ENCODE measurements at regions of chr17 and their contacts with region 1.

Region 1: GRCh38 chr17:20121359-20122253 is 112.4 kb downstream of the SPECC1 start:
- DNase-seq: peak; percentile 47
- H3K4me3 ChIP-seq: no peak overlapping the region
- H3K27ac ChIP-seq: no peak overlapping the region
- H3K4me1 ChIP-seq: no peaks in the 10 kb centered on the region
- H3K27me3 ChIP-seq: no peaks in the 10 kb centered on the region
- CTCF ChIP-seq: peak; percentile 76 to 87 (median 82)
- POLR2A ChIP-seq: no peak

Region 2: GRCh38 chr17:19771971-19772630 is 349.5 kb before region 1 on chr17:
- intact Hi-C with region 1: no loop called
- DNase-seq: no peak
- H3K4me3 ChIP-seq: no peak overlapping the region
- H3K27ac ChIP-seq: peak overlapping the region in 1 of 2 donors; percentile 48
- H3K4me1 ChIP-seq: no peaks in the 10 kb centered on the region
- H3K27me3 ChIP-seq: no peaks in the 10 kb centered on the region
- CTCF ChIP-seq: no peak
- POLR2A ChIP-seq: no peak

Region 3: GRCh38 chr17:19992803-19993713 is 128.5 kb before region 1 on chr17:
- intact Hi-C with region 1: loop called (anchors 2 kb)
- DNase-seq: peak; percentile 87
- H3K4me3 ChIP-seq: no peak overlapping the region
- H3K27ac ChIP-seq: no peak overlapping the region
- H3K4me1 ChIP-seq: no peaks in the 10 kb centered on the region
- H3K27me3 ChIP-seq: no peaks in the 10 kb centered on the region
- CTCF ChIP-seq: peak; percentile 46 to 89 (median 86)
- POLR2A ChIP-seq: no peak

Region 4: DNA sequence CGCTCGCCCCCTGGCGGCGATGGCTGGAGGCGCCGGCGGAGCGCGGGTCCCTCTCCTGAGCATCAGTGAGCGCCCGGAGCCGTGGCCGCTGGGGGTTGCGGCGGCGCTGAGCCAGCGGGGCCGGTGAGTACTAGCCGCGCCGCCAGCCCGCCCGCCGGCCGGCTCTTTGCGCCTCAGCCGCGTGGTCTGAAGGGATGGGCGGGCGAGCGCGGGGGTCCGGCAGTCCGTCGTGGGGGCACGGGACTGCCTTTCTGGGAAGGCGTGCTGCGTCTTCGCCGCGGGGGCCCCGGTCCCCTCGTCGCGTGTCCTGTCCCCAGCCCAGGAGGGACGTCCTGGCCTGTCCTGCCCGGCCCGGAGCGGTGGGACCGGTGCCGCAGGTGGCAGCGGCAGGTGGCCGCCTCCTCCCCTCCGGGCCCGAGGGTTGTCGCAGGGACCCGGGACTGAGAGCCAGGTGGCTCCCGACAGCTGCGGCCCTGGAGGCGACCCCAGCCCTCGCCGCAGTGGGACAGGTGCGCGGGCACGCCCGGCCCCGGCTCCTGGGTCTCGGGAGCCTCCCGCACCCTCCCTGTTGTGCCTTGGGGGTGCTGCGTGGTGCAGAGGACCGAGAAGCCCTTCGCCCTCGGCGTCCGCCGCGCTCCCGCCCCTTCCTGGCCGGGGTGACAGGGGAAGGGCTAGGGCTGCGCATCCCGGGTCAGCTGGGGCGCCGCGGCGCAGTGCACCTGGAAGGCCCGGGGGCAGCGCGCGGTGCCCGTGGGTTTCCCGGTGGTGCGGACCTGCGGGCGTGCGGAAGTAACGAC is 112.1 kb before region 1 on chr17 and contains the start of gene SPECC1:
- intact Hi-C with region 1: loop called (anchors 5 kb)
- DNase-seq: peak; percentile 63
- H3K4me3 ChIP-seq: peak within 1 kb of the TSS; percentile 46 to 47
- H3K27ac ChIP-seq: peak within 1 kb of the TSS; percentile 45 to 63
- H3K4me1 ChIP-seq: peaks cover 3% of the 10 kb centered on the region
- H3K27me3 ChIP-seq: no peaks in the 10 kb centered on the region
- CTCF ChIP-seq: peak; percentile 91 to 97 (median 94)
- POLR2A ChIP-seq: no peak
- total RNA-seq, gene SPECC1: 29.7 to 85.5 TPM

Region 5: DNA sequence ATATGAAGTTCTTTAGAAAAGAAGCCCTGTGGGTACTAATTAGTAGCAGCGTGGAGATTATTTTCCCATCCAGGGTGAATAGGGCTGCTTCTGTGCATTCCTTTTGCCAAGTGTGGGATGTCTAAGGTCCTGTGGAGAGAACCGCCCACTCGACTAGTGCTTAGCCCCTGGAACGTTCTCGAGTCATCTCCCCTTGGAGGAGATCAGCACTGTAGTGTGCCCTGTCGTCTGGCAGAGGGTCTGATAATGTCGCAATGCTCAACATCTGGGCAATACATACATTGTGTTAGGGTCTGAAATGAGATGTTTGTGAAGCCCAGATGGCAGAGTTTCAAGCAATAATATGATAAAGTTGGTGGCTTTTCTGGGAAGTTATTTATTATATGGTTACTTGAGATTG is 47.6 kb before region 1 on chr17:
- intact Hi-C with region 1: no loop called
- DNase-seq: no peak
- H3K4me3 ChIP-seq: no peak overlapping the region
- H3K27ac ChIP-seq: no peak overlapping the region
- H3K4me1 ChIP-seq: no peaks in the 10 kb centered on the region
- H3K27me3 ChIP-seq: no peaks in the 10 kb centered on the region
- CTCF ChIP-seq: no peak
- POLR2A ChIP-seq: no peak

Region 6: DNA sequence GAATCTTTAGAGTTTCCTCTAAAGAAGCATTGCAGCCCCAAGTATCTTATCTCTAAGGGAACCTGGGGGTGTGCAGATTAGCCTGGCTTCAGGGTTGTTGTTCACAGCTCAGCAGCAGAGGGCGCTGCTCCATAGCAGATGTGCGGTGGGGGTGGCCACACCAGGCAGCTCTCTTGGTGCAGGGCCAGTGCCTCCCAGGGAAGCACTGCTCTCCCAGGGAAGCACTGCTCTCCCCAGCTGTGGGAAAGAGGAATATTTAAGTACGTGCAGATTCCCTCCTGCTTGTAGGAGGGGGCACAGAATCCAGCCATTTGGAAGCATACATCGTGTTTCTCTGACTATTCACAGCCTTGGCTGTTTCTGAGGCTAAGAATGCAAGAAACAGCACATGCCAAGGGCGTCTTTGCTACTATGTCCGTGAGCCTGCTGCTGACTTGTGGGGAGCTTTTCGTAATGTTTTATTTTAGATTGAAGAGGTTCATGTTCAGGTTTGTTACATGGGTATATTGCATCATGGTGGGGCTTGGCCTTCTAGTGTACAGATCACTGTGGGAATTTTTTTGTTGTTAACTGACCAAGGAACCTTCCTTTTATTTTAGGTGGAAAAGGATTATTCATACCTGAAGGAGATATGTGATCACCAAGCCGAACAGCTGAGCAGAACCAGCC is 105.3 kb after region 1 on chr17:
- intact Hi-C with region 1: loop called (anchors 2 kb)
- DNase-seq: peak; percentile 74
- H3K4me3 ChIP-seq: no peak overlapping the region
- H3K27ac ChIP-seq: no peak overlapping the region
- H3K4me1 ChIP-seq: no peaks in the 10 kb centered on the region
- H3K27me3 ChIP-seq: no peaks in the 10 kb centered on the region
- CTCF ChIP-seq: peak; percentile 41 to 88 (median 78)
- POLR2A ChIP-seq: no peak

Region 7: GRCh38 chr17:20281860-20282259 is 160.3 kb after region 1 on chr17:
- intact Hi-C with region 1: no loop called
- DNase-seq: no peak
- H3K4me3 ChIP-seq: no peak overlapping the region
- H3K27ac ChIP-seq: no peak overlapping the region
- H3K4me1 ChIP-seq: no peaks in the 10 kb centered on the region
- H3K27me3 ChIP-seq: no peaks in the 10 kb centered on the region
- CTCF ChIP-seq: no peak
- POLR2A ChIP-seq: no peak

Region 8: DNA sequence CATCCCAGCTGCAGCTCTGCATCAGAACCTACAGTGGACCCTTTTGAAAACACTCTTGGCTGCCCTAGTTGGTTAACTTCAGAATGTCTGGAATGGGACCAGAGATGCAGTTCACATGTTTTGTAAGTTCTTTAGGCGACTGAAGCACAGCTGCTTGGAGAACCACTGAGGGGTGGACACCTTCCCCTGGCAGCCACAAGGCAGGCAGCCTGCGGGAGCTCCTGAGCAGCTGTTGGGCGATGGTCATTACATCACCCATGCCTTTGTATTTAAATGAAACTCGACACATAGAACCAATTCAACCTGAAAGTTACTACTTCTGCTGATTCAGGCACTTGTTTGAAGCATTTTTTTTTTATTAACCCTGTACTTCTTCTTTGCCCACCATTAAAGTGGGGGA is 194.2 kb after region 1 on chr17:
- intact Hi-C with region 1: loop called (anchors 10 kb)
- DNase-seq: no peak
- H3K4me3 ChIP-seq: no peak overlapping the region
- H3K27ac ChIP-seq: no peak overlapping the region
- H3K4me1 ChIP-seq: no peaks in the 10 kb centered on the region
- H3K27me3 ChIP-seq: no peaks in the 10 kb centered on the region
- CTCF ChIP-seq: no peak
- POLR2A ChIP-seq: no peak